ENCODE measurements at regions of chr5 and their contacts with region 1.

Region 1: DNA sequence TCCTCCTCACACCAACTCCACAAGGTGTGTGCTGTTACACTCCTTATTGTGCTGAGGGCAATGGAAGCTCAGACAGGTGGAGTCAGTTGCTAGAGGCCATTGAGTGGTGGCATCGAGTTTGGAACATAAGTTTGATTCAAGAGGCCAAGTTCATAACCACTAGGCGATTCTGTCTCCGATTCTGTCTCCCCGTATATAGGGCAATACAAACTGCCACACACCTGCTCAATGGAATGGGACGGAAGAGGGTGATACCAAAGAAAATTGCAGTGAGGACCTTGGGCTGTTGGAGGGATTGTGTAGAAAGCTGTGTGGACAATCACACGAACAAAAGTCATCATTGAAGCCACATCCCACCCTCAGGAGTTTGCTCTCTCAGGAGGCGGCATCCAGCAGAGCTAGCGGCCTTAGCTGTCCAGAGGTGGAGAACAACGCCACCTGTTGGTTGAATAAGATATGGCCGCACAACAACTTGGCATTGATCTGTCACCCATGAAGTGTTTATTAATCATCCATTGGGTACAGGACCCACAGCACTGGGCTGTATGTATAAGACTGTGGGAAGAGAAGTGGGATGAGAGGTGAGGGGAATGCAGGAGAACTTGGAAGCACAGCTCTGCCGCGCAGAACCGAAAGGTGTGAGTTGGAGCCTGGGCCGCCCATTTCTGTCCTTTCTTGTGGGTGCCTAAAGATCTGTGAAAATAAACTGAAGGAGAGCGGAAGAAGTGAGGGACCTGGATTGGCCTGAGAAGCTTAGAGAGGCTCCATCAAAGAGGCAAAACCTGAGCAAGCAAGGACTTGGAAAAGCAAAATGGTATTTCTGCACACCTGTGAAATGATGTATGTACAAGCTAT is 16.1 kb upstream of the NEUROG1 start:
- DNase-seq: peak; percentile 68
- H3K4me3 Mint-ChIP-seq: no peak overlapping the region
- H3K27ac Mint-ChIP-seq: no peak overlapping the region
- H3K4me1 Mint-ChIP-seq: no peaks in the 10 kb centered on the region
- H3K27me3 Mint-ChIP-seq: peaks cover 54% of the 10 kb centered on the region

Region 2: GRCh38 chr5:135457424-135458071 is 94.3 kb before region 1 on chr5:
- CTCF ChIA-PET with region 1: interaction called, 211 read pairs
- POLR2A ChIA-PET with region 1: interaction called, 4 read pairs
- DNase-seq: peak; percentile 68
- H3K4me3 Mint-ChIP-seq: no peak overlapping the region
- H3K27ac Mint-ChIP-seq: no peak overlapping the region
- H3K4me1 Mint-ChIP-seq: peaks cover 3% of the 10 kb centered on the region
- H3K27me3 Mint-ChIP-seq: peaks cover 36% of the 10 kb centered on the region

Region 3: GRCh38 chr5:135466178-135467050 is 85.4 kb before region 1 on chr5:
- CTCF ChIA-PET with region 1: interaction called, 211 read pairs
- POLR2A ChIA-PET with region 1: interaction called, 4 read pairs
- DNase-seq: peak; percentile 70
- H3K4me3 Mint-ChIP-seq: peak overlapping the region; percentile 16
- H3K27ac Mint-ChIP-seq: no peak overlapping the region
- H3K4me1 Mint-ChIP-seq: peaks cover 7% of the 10 kb centered on the region
- H3K27me3 Mint-ChIP-seq: peaks cover 49% of the 10 kb centered on the region

Region 4: GRCh38 chr5:135535820-135536801 is 15.7 kb before region 1 on chr5 and contains the start of gene NEUROG1:
- CTCF ChIA-PET with region 1: interaction called, 10 read pairs
- POLR2A ChIA-PET with region 1: no interaction called
- DNase-seq: no peak
- H3K4me3 Mint-ChIP-seq: no peak within 1 kb of the TSS
- H3K27ac Mint-ChIP-seq: no peak within 1 kb of the TSS
- H3K4me1 Mint-ChIP-seq: peaks cover 6% of the 10 kb centered on the region
- H3K27me3 Mint-ChIP-seq: peaks cover 82% of the 10 kb centered on the region
- total RNA-seq, gene NEUROG1: not detected

Measured in activated CD4-positive, alpha-beta memory T cell treated with anti-CD3 and anti-CD28 coated beads, Interleukin-2, amount 10 ng/mL, durations not matched to agents 7 days and 5 days (primary cell).